ENCODE measurements at regions of chr19 and their contacts with region 1.

Region 1: DNA sequence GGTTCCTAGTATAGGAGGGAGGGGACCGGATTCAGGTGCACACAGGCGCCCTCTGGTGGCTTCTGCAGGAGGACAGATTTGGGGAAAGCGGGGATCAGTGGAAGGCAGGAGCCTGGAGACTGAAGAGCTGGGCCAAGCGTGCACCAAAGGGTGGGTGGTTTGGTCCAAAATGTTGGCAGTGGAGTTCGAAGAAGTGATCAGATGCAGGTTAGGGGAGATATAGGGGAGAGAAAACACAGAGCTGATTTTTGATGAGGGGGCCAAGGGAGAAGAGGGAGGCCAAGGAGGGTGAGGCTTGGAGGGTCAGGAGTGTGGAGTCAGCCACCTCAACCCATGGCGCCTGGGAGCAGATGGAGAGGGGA is 6.8 kb upstream of the CARM1 start:
- DNase-seq: peak; percentile 90
- ATAC-seq: peak; percentile 89
- H3K4me3 Mint-ChIP-seq: no peak overlapping the region
- H3K27ac Mint-ChIP-seq: no peak overlapping the region
- H3K4me1 Mint-ChIP-seq: peaks cover 12% of the 10 kb centered on the region
- H3K27me3 Mint-ChIP-seq: no peaks in the 10 kb centered on the region
- CTCF ChIP-seq: peak; percentile 97

Region 2: GRCh38 chr19:10701955-10702525 is 162.5 kb before region 1 on chr19:
- CTCF ChIA-PET with region 1: interaction called, 12 read pairs
- POLR2A ChIA-PET with region 1: interaction called, 4 read pairs
- intact Hi-C with region 1: no loop called
- DNase-seq: peak; percentile 57
- ATAC-seq: peak; percentile 56
- H3K4me3 Mint-ChIP-seq: peak overlapping the region; percentile 93
- H3K27ac Mint-ChIP-seq: peak overlapping the region; percentile 88
- H3K4me1 Mint-ChIP-seq: peaks cover 8% of the 10 kb centered on the region
- H3K27me3 Mint-ChIP-seq: peaks cover 2% of the 10 kb centered on the region
- CTCF ChIP-seq: no peak

Region 3: DNA sequence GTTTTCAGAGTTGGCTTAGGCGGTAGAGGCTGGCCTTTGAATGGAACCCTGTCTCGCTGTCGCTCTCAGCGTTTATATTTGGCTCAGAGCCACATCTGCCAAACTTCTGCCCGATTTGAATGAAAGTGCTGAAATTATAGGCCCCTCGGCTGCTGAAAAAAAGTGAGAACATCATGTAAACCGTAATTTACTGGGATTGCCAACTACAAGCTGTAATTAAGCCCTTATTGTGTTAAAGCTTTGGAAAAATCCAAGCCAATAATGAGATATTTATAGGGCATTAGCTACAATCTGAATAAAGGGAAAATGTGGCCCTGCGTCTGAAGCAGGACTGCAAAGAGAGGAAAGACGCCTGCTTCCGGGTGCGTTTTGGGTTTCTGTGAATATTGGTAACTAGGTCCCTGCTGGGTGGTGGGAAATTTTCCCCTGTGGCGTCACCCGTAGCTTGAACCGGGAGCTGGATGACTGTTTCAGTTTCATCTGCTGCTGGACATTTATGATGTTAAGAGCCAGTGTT is 136.8 kb before region 1 on chr19:
- CTCF ChIA-PET with region 1: interaction called, 11 read pairs
- POLR2A ChIA-PET with region 1: no interaction called
- intact Hi-C with region 1: no loop called
- DNase-seq: no peak
- ATAC-seq: no peak
- H3K4me3 Mint-ChIP-seq: no peak overlapping the region
- H3K27ac Mint-ChIP-seq: peak overlapping the region; percentile 56
- H3K4me1 Mint-ChIP-seq: peaks cover 51% of the 10 kb centered on the region
- H3K27me3 Mint-ChIP-seq: no peaks in the 10 kb centered on the region
- CTCF ChIP-seq: no peak

Region 4: DNA sequence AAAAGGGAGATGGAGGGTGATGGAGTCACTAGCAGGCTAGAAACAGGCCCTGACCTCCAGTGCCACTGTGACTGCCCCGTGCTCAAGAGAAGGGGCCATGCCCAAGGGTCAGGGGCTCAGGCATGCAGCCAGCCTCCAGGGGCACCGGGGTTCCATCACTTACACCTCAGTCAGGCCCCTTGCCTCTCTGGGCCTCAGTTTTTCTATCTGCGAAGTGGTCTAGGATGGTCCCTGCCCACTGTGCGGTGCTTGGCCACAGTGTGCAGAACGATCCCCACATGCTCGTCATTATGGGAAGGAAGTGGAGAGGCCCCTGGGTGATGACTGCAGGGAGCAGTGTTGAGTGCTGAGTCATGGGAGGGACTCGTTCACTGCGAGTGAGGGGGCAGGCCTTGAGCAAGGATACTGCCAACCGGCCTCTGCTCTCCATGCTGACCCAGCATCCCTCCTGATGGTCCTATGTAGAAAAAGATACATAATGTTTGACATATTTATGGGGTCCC is 51.6 kb before region 1 on chr19:
- CTCF ChIA-PET with region 1: interaction called, 10 read pairs
- POLR2A ChIA-PET with region 1: interaction called, 3 read pairs
- intact Hi-C with region 1: no loop called
- DNase-seq: peak; percentile 69
- ATAC-seq: peak; percentile 81
- H3K4me3 Mint-ChIP-seq: no peak overlapping the region
- H3K27ac Mint-ChIP-seq: peak overlapping the region; percentile 77
- H3K4me1 Mint-ChIP-seq: peaks cover 26% of the 10 kb centered on the region
- H3K27me3 Mint-ChIP-seq: no peaks in the 10 kb centered on the region
- CTCF ChIP-seq: no peak

Region 5: GRCh38 chr19:10828981-10829821 is 35.3 kb before region 1 on chr19:
- CTCF ChIA-PET with region 1: interaction called, 40 read pairs
- POLR2A ChIA-PET with region 1: no interaction called
- intact Hi-C with region 1: no loop called
- DNase-seq: peak; percentile 38
- ATAC-seq: peak; percentile 55
- H3K4me3 Mint-ChIP-seq: no peak overlapping the region
- H3K27ac Mint-ChIP-seq: no peak overlapping the region
- H3K4me1 Mint-ChIP-seq: no peaks in the 10 kb centered on the region
- H3K27me3 Mint-ChIP-seq: no peaks in the 10 kb centered on the region
- CTCF ChIP-seq: peak; percentile 22

Region 6: GRCh38 chr19:10848230-10848856 is 16.2 kb before region 1 on chr19 and contains the start of gene C19orf38:
- CTCF ChIA-PET with region 1: interaction called, 137 read pairs
- POLR2A ChIA-PET with region 1: no interaction called
- intact Hi-C with region 1: no loop called
- DNase-seq: peak; percentile 26
- ATAC-seq: peak; percentile 64
- H3K4me3 Mint-ChIP-seq: peak within 1 kb of the TSS; percentile 60
- H3K27ac Mint-ChIP-seq: peak within 1 kb of the TSS; percentile 75
- H3K4me1 Mint-ChIP-seq: peaks cover 8% of the 10 kb centered on the region
- H3K27me3 Mint-ChIP-seq: no peaks in the 10 kb centered on the region
- CTCF ChIP-seq: no peak
- total RNA-seq, gene C19orf38: 1.2 to 1.3 TPM

Measured in activated CD8-positive, alpha-beta T cell treated with anti-CD3 and anti-CD28 coated beads for 36 hours (primary cell).